Colonic mucosa (tissue), 4 donors: ENCODE measurements at regions of chr2 and their contacts with region 1.

Region 1: DNA sequence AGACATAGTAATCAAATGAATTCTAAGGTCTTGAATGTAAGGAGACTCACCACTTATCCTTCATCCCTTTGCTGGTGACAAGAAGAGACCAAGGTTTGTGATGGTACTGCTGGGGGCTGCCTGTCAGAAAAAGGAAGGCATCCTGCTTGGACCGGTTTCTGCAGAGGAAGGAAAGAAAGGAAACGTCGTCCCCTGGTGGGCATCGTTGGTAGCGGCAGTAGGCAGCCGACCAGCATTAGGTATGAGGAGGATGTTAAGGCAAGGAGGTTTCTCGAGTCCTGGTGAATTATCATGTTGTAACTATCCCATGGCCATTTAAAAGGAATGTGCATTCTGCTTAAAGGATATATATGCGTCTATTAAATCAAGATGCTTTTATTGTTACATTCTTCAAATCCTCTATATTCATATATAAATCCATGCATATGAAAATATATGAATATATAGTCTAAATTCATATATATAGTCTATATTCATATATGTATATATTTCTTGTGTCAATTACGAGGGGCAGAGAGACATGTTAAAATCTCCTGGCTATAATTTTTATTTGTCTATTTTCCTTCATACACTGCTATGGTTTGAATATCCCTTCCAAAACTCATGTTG is 94.4 kb upstream of the TGFA start:
- DNase-seq: peak; percentile 66
- H3K4me3 ChIP-seq: no peak overlapping the region
- H3K27ac ChIP-seq: no peak overlapping the region
- H3K4me1 ChIP-seq: no peaks in the 10 kb centered on the region
- H3K27me3 ChIP-seq: no peaks in the 10 kb centered on the region
- CTCF ChIP-seq: peak; percentile 95

Region 2: DNA sequence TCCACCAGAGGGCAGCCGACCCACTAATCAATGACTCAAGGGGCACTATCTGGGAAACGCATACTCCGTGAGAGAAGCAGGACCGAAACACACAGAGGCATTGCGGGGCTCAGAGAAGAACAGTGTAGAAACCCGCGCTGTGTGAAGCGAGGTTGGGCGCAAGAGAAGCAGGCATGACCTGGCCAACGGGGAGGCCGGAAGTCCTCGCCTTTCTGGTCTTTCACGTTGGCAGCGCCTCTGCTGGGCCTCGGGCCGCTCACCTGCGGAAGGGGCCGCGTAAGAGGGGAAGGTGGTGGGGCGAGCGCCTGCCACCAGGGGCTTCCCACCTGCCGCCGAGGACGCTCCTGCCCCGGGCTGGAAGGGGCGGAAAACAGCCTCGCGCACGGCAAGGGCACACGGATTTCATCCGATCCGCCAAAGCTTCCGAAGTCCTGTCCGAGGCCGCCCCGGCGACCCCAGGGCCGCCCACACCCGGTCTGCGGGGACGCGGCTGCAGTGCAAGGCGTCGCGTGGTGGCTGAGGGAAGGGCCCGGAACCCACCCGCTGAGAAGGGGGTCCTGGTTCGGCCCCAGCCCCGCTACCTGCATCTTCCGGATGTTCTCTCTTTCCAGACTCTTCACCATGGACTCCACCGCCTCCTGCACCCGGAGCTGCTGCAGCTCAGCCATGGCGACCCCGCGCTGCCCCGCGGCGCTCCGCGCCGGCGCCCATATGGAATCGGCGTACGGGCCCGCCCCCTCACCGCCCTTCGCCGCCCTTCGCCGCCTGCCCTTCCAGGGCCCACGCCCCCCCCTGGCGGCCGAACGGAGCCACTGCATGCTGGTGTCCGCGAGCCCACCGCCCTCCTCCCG is 346.4 kb before region 1 on chr2 and contains the start of gene FAM136A:
- intact Hi-C with region 1: loop called (anchors 5 kb)
- DNase-seq: peak; percentile 86
- H3K4me3 ChIP-seq: peak within 1 kb of the TSS; percentile 97
- H3K27ac ChIP-seq: peak within 1 kb of the TSS; percentile 90
- H3K4me1 ChIP-seq: peaks cover 4% of the 10 kb centered on the region
- H3K27me3 ChIP-seq: no peaks in the 10 kb centered on the region
- CTCF ChIP-seq: peak; percentile 97
- total RNA-seq, gene FAM136A: 44.0 to 48.4 TPM

Region 3: GRCh38 chr2:70340921-70341765 is 306.8 kb before region 1 on chr2:
- intact Hi-C with region 1: loop called (anchors 5 kb)
- DNase-seq: peak; percentile 46
- H3K4me3 ChIP-seq: no peak overlapping the region
- H3K27ac ChIP-seq: no peak overlapping the region
- H3K4me1 ChIP-seq: no peaks in the 10 kb centered on the region
- H3K27me3 ChIP-seq: no peaks in the 10 kb centered on the region
- CTCF ChIP-seq: peak; percentile 69

Region 4: GRCh38 chr2:70607121-70607561 is 40.8 kb before region 1 on chr2:
- intact Hi-C with region 1: no loop called
- DNase-seq: no peak
- H3K4me3 ChIP-seq: no peak overlapping the region
- H3K27ac ChIP-seq: no peak overlapping the region
- H3K4me1 ChIP-seq: no peaks in the 10 kb centered on the region
- H3K27me3 ChIP-seq: no peaks in the 10 kb centered on the region
- CTCF ChIP-seq: no peak